ENCODE measurements at regions of chr2 and their contacts with region 1.

Region 1: DNA sequence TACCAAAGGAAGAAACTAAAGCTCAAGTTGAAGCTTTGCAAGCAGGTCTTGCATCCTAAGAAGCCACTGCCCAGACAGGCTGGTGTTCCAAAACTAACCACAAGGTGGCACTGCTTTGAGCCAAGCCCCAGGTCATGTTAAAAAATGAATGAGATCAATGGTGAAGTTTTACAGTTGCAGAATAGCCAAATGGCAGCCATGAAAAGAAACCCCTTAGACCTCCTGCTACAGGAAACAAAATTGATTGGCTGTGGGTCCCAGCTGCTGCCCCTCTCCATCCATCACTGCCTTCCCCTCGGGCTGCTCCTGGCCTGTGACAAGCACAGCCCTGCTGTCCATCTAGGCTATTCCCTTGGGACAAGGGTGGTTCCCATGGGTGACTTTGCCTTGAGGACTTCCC is 20.7 kb upstream of the MREG start:
- DNase-seq: peak; percentile 57 to 82 (median 60)
- H3K4me3 ChIP-seq: no peak overlapping the region
- H3K4me3 Mint-ChIP-seq: no peak overlapping the region
- H3K27ac ChIP-seq: no peak overlapping the region
- H3K27ac Mint-ChIP-seq: no peak overlapping the region
- H3K4me1 ChIP-seq: no peaks in the 10 kb centered on the region
- H3K4me1 Mint-ChIP-seq: peaks cover 3 to 8% (median 3%) of the 10 kb centered on the region in 3 donors
- H3K27me3 ChIP-seq: no peaks in the 10 kb centered on the region
- H3K27me3 Mint-ChIP-seq: no peaks in the 10 kb centered on the region

Region 2: DNA sequence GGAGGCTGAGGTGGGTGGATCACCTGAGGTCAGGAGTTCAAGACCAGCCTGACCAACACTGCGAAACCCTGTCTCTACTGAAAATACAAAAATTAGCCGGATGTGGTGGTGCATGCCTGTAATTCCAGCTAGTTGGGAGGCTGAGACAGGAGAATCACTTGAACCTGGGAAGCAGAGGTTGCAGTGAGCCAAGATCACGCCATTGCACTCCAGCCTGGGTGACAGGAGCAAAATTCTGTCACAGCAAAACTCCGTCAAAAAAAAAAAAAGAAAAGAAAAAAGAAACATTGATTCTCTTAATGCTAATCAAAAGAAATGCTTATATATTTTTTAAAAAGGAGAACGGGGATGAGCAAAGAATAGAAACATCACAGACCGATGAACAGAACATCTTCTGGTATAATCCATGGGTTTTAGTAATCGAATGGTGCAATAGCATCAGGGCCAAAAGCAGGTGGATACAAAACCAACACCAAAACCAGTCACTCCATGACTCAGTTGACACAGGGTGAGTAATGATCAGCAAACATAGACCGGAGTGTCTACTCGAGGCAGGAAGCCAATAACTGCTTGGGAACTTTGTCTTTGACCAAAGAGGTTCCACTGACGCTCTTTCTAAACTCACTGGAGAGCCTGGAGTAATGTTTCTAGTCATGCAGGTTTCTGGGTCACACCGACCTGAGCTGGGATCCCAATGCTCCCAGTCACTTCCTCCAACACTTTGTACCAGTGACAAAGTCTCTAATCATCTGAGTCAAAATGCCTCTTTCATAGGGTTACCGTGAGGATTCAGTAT is 51.8 kb before region 1 on chr2:
- CTCF ChIA-PET with region 1: no interaction called
- POLR2A ChIA-PET with region 1: no interaction called
- DNase-seq: no peak
- H3K4me3 ChIP-seq: no peak overlapping the region
- H3K4me3 Mint-ChIP-seq: peak overlapping the region in 1 of 7 donors; percentile 17
- H3K27ac ChIP-seq: no peak overlapping the region
- H3K27ac Mint-ChIP-seq: peak overlapping the region in 3 of 8 donors; percentile 70 to 82 (median 80)
- H3K4me1 ChIP-seq: no peaks in the 10 kb centered on the region
- H3K4me1 Mint-ChIP-seq: peaks cover 18 to 38% (median 32%) of the 10 kb centered on the region in 3 donors
- H3K27me3 ChIP-seq: no peaks in the 10 kb centered on the region
- H3K27me3 Mint-ChIP-seq: no peaks in the 10 kb centered on the region

Region 3: GRCh38 chr2:216013080-216013909 is 20.8 kb before region 1 on chr2 and contains the start of gene MREG:
- CTCF ChIA-PET with region 1: interaction called, 16 read pairs
- POLR2A ChIA-PET with region 1: no interaction called
- DNase-seq: peak; percentile 77 to 88 (median 79)
- H3K4me3 ChIP-seq: peak within 1 kb of the TSS; percentile 59
- H3K4me3 Mint-ChIP-seq: peak within 1 kb of the TSS; percentile 89 to 97 (median 93)
- H3K27ac ChIP-seq: no peak within 1 kb of the TSS
- H3K27ac Mint-ChIP-seq: peak within 1 kb of the TSS; percentile 26 to 92 (median 84)
- H3K4me1 ChIP-seq: peaks cover 41% of the 10 kb centered on the region
- H3K4me1 Mint-ChIP-seq: peaks cover 48 to 72% (median 70%) of the 10 kb centered on the region in 3 donors
- H3K27me3 ChIP-seq: no peaks in the 10 kb centered on the region
- H3K27me3 Mint-ChIP-seq: no peaks in the 10 kb centered on the region
- total RNA-seq, gene MREG: 25.4 to 26.2 TPM

Region 4: DNA sequence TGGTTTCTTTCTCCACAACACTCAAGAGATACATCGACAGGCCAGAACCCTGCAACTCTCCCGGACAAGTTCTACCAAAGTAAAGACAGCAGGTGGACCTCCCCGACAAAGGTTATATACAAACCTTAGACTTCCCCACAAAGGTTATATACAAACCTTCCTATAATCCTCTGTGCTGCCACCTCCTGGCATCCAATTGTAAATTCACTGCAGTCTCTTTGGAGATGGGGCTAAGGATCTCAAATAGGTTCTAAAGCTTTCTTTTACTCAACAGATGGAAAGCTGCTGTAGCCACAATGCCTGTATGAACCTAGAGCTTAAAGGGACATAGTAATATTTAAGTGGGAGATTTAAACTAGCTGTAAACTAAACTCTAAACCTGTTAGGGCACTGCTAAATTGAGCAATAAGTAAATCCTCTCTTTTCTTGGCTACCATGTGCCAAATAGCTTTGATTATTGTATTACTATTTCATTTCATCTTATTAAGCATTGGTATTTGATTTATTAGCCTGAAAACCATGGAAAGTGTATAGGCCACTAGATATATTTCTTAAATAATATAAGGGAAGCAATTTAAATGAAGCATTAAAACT is 10.9 kb before region 1 on chr2:
- CTCF ChIA-PET with region 1: interaction called, 21 read pairs
- POLR2A ChIA-PET with region 1: no interaction called
- DNase-seq: peak in 4 of 5 donors; percentile 19 to 30 (median 23)
- H3K4me3 ChIP-seq: no peak overlapping the region
- H3K4me3 Mint-ChIP-seq: no peak overlapping the region
- H3K27ac ChIP-seq: no peak overlapping the region
- H3K27ac Mint-ChIP-seq: peak overlapping the region in 2 of 8 donors; percentile 15 to 51
- H3K4me1 ChIP-seq: no peaks in the 10 kb centered on the region
- H3K4me1 Mint-ChIP-seq: peaks cover 5 to 8% (median 8%) of the 10 kb centered on the region in 3 donors
- H3K27me3 ChIP-seq: no peaks in the 10 kb centered on the region
- H3K27me3 Mint-ChIP-seq: no peaks in the 10 kb centered on the region

Region 5: GRCh38 chr2:216108967-216109921 is 75.2 kb after region 1 on chr2 and contains the start of gene XRCC5:
- CTCF ChIA-PET with region 1: interaction called, 27 read pairs
- POLR2A ChIA-PET with region 1: no interaction called
- DNase-seq: peak; percentile 95 to 99 (median 96)
- H3K4me3 ChIP-seq: peak within 1 kb of the TSS; percentile 97
- H3K4me3 Mint-ChIP-seq: peak within 1 kb of the TSS; percentile 98 to 100 (median 100)
- H3K27ac ChIP-seq: peak within 1 kb of the TSS; percentile 93
- H3K27ac Mint-ChIP-seq: peak within 1 kb of the TSS; percentile 98 to 100 (median 100)
- H3K4me1 ChIP-seq: peaks cover 50% of the 10 kb centered on the region
- H3K4me1 Mint-ChIP-seq: peaks cover 50 to 62% (median 61%) of the 10 kb centered on the region in 3 donors
- H3K27me3 ChIP-seq: no peaks in the 10 kb centered on the region
- H3K27me3 Mint-ChIP-seq: peaks cover 0 to 6% of the 10 kb centered on the region in 2 donors
- total RNA-seq, gene XRCC5: 612 to 643 TPM

Region 6: DNA sequence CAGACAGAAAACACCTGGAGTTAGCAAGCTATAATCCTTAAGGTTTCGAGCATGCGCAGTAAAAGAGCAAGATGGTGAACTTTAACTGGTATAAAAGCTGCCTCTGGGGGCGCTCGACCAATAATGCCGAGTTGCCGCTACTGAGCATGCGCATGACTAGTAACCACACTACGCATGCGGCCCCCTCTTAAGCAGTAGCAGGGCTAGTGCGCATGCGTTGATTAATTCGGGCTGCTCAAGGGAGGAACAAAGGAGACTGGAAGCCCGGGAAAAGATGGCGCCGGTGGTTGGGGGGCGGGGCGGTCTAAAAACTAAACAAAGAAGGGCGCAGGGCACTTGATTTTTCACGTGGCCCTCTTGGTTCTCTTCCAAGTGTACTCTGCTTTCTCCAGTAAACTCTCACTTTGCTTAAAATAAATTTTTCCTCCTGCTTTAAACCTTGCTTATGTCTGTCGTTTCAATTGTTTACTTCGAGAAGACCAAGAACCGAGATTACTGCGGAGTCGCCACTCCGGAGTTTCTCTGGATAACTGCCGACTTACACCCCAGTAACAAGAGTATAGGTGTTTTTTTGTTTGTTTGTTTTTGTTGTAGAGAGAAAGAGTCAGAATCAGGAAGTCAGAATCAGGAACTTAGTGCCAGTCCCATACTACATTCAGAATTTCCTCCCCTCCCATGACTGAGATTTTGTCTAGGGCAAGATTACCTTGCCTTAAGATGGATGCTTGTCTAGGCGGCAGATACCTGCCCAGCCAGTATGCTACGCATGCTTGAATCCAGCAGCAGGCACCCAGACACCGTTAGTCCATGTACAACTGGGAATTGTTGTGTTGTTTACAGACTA is 80.9 kb after region 1 on chr2:
- CTCF ChIA-PET with region 1: interaction called, 27 read pairs
- POLR2A ChIA-PET with region 1: no interaction called
- DNase-seq: peak; percentile 94 to 99 (median 96)
- H3K4me3 ChIP-seq: peak overlapping the region; percentile 57
- H3K4me3 Mint-ChIP-seq: peak overlapping the region; percentile 88 to 94 (median 92)
- H3K27ac ChIP-seq: peak overlapping the region; percentile 71
- H3K27ac Mint-ChIP-seq: peak overlapping the region; percentile 93 to 98 (median 97)
- H3K4me1 ChIP-seq: peaks cover 94% of the 10 kb centered on the region
- H3K4me1 Mint-ChIP-seq: peaks cover 83 to 100% (median 99%) of the 10 kb centered on the region in 3 donors
- H3K27me3 ChIP-seq: no peaks in the 10 kb centered on the region
- H3K27me3 Mint-ChIP-seq: peaks cover 0 to 1% of the 10 kb centered on the region in 2 donors

Region 7: DNA sequence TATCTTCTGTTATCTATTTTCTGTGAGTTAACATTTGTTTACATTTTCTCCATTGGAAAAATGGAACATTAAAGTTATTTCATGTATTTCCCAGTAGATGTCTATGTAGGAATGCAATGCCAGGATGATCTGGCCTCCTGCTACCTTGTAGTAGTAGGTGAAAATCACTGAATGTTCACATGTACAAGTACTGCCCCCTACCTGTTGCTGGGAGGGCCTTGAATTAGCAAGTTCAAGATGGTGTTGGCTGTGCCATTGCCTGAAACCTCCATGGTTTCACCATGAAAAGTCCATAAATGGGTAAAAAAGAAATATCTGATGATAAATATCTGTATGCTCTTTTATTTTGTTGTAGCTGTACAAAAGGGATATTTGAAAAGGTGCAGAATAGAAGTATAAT is 105.8 kb after region 1 on chr2:
- CTCF ChIA-PET with region 1: interaction called, 14 read pairs
- POLR2A ChIA-PET with region 1: interaction called, 3 read pairs
- DNase-seq: peak in 1 of 5 donors; percentile 42
- H3K4me3 ChIP-seq: no peak overlapping the region
- H3K4me3 Mint-ChIP-seq: no peak overlapping the region
- H3K27ac ChIP-seq: no peak overlapping the region
- H3K27ac Mint-ChIP-seq: peak overlapping the region in 4 of 8 donors; percentile 5 to 50 (median 24)
- H3K4me1 ChIP-seq: no peaks in the 10 kb centered on the region
- H3K4me1 Mint-ChIP-seq: peaks cover 14 to 35% (median 25%) of the 10 kb centered on the region in 3 donors
- H3K27me3 ChIP-seq: no peaks in the 10 kb centered on the region
- H3K27me3 Mint-ChIP-seq: no peaks in the 10 kb centered on the region

Region 8: DNA sequence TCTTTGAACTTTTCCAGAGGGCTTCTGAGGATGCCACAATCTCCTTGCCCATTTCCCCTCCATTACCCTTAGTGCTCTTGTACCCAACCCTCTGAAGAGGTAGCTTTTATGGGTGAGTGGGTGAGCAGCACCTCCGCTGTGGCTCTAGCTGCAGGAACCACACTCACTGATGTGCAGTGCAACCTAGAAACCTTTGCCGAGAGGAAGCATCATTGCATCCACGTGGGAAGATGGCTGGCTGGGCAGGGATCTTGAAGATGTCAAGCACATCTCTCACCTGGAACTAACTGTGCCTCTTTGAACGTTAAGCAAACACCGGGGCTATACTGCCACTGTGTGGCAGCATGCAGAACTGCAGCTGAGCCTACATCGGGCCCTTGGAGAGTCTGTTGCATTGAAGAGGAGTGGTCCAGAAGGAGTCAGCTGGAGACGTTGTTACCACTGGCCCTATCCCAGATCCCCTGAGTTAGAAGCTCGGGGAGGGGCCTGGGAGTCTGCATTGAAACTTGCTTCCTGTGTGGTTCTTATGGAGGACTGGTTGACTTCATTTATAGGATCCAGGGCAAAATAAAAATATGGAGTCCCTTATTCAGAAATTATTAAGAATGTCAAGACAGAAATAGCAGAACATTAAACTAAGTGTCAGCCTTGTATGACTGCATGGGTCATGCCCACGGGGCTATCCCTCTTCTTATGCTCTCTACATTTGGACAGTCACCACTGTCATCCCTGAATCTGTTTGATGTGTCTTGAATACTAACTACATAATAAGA is 632.6 kb after region 1 on chr2:
- CTCF ChIA-PET with region 1: interaction called, 14 read pairs
- POLR2A ChIA-PET with region 1: no interaction called
- DNase-seq: peak; percentile 38 to 72 (median 56)
- H3K4me3 ChIP-seq: no peak overlapping the region
- H3K4me3 Mint-ChIP-seq: no peak overlapping the region
- H3K27ac ChIP-seq: no peak overlapping the region
- H3K27ac Mint-ChIP-seq: no peak overlapping the region
- H3K4me1 ChIP-seq: no peaks in the 10 kb centered on the region
- H3K4me1 Mint-ChIP-seq: no peaks in the 10 kb centered on the region
- H3K27me3 ChIP-seq: no peaks in the 10 kb centered on the region
- H3K27me3 Mint-ChIP-seq: peaks cover 22 to 24% of the 10 kb centered on the region in 2 donors